MCF 10A (cell line): ENCODE measurements at regions of chr5 and their contacts with region 1.

Region 1: DNA sequence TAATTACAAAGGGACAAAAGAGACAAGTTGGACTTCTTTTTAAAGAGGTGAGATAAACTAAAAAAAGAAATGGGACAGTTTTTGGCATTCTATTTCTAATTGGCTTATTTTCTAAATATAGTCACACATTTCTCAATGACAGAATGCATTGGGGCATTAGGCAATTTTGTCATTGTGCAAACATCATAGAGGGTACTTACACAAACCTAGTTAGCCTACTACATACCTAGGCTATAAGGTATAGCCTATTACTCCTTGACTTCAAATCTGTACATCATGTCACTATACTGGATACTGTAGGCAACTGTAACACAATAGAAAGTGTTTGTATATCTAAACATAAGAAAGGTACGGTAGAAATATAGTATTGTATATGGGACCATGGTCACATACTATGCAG is 56.1 kb downstream of the LSM11 start:
- DNase-seq: peak; percentile 30
- H3K4me3 Mint-ChIP-seq: no peak overlapping the region
- H3K27ac Mint-ChIP-seq: no peak overlapping the region
- H3K4me1 Mint-ChIP-seq: no peaks in the 10 kb centered on the region
- H3K27me3 Mint-ChIP-seq: no peaks in the 10 kb centered on the region
- CTCF ChIP-seq: no peak

Region 2: GRCh38 chr5:157415838-157416237 is 383.7 kb before region 1 on chr5:
- CTCF ChIA-PET with region 1: no interaction called
- POLR2A ChIA-PET with region 1: no interaction called
- intact Hi-C with region 1: no loop called
- DNase-seq: no peak
- H3K4me3 Mint-ChIP-seq: no peak overlapping the region
- H3K27ac Mint-ChIP-seq: no peak overlapping the region
- H3K4me1 Mint-ChIP-seq: no peaks in the 10 kb centered on the region
- H3K27me3 Mint-ChIP-seq: no peaks in the 10 kb centered on the region
- CTCF ChIP-seq: no peak

Region 3: DNA sequence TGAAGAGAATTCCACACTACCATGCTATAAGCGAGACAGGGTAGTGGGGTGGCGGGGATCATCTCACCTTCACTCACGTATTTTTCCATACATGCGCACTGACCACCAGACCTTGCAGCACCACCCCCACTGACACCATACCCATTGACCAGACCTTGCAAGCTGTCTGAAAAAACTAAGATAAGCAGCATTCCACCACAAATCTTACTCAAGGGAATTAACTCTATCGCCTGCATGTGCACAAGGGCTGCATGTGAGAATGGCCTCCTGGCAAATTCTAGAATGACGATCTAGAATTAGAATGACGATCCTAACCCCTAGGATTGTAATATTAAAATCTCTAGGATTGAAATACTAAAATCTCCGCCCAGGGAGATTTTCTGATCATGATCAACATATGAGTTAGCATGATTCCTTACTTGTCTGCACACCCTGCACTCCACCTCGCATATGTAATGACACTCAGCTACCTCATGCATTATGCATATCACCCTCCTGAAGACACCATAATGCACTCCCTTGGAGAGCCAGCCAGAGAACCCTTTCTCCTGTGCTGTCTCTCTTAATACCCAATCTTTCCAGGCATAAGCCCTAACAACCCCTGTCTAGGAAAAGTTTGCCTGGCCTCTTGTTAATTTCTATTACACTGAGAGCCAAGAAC is 159.0 kb before region 1 on chr5:
- CTCF ChIA-PET with region 1: no interaction called
- POLR2A ChIA-PET with region 1: no interaction called
- intact Hi-C with region 1: no loop called
- DNase-seq: no peak
- H3K4me3 Mint-ChIP-seq: no peak overlapping the region
- H3K27ac Mint-ChIP-seq: no peak overlapping the region
- H3K4me1 Mint-ChIP-seq: no peaks in the 10 kb centered on the region
- H3K27me3 Mint-ChIP-seq: no peaks in the 10 kb centered on the region
- CTCF ChIP-seq: no peak

Region 4: GRCh38 chr5:157812086-157812485 is 12.5 kb after region 1 on chr5:
- CTCF ChIA-PET with region 1: interaction called, 6 read pairs
- POLR2A ChIA-PET with region 1: interaction called, 10 read pairs
- intact Hi-C with region 1: no loop called
- DNase-seq: no peak
- H3K4me3 Mint-ChIP-seq: no peak overlapping the region
- H3K27ac Mint-ChIP-seq: no peak overlapping the region
- H3K4me1 Mint-ChIP-seq: no peaks in the 10 kb centered on the region
- H3K27me3 Mint-ChIP-seq: no peaks in the 10 kb centered on the region
- CTCF ChIP-seq: no peak

Region 5: GRCh38 chr5:157941616-157942015 is 142.0 kb after region 1 on chr5:
- CTCF ChIA-PET with region 1: no interaction called
- POLR2A ChIA-PET with region 1: no interaction called
- intact Hi-C with region 1: no loop called
- DNase-seq: no peak
- H3K4me3 Mint-ChIP-seq: no peak overlapping the region
- H3K27ac Mint-ChIP-seq: no peak overlapping the region
- H3K4me1 Mint-ChIP-seq: no peaks in the 10 kb centered on the region
- H3K27me3 Mint-ChIP-seq: no peaks in the 10 kb centered on the region
- CTCF ChIP-seq: no peak